Upper lobe of right lung (tissue), 1 donor: ENCODE measurements at regions of chr21 and their contacts with region 1.

Region 1: DNA sequence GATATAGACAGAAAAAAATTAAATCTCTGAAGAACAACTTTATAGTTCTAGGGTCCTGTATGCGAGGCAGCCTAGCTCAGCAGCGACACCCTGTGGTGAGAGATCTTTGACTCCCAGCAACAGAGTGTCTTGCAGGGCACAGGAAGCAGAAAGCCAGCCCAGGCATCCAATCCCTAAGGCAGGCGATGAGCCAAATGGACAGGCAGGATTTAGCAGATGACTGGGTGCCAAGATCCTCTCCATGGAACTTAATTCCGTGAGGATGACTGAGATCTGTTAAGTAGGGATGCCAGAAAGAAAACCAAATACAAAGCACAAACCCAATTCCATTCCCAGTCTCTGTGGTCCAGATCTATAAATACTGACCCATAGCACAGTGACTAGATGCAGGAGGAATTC is 38.8 kb downstream of the HLCS start:
- DNase-seq: peak; percentile 76
- ATAC-seq: peak; percentile 91
- H3K4me3 ChIP-seq: no peak overlapping the region
- H3K27ac ChIP-seq: no peak overlapping the region
- H3K4me1 ChIP-seq: peaks cover 2% of the 10 kb centered on the region
- H3K27me3 ChIP-seq: no peaks in the 10 kb centered on the region
- CTCF ChIP-seq: peak; percentile 89

Region 2: DNA sequence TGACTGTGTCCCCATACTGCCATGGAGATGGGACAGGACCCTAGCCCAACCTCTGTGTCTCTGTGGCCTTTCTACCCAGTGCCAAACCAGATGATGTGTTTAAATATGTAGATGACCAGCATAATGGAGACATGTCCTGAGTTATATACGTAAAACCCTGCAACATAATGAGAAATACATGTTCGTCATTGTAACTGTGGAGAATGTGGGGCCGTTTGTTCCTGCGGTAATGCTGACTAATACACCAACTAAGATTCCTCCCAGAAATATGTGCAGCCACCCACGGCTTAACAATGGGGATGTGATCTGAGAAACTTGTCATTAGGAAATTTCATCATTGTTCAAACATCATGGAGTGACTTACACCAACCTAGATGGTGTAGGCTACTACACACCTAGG is 300.5 kb before region 1 on chr21:
- intact Hi-C with region 1: loop called (anchors 10 kb)
- DNase-seq: no peak
- ATAC-seq: no peak
- H3K4me3 ChIP-seq: no peak overlapping the region
- H3K27ac ChIP-seq: no peak overlapping the region
- H3K4me1 ChIP-seq: no peaks in the 10 kb centered on the region
- H3K27me3 ChIP-seq: peaks cover 11% of the 10 kb centered on the region
- CTCF ChIP-seq: no peak

Region 3: GRCh38 chr21:36792505-36792967 is 135.2 kb before region 1 on chr21:
- intact Hi-C with region 1: no loop called
- DNase-seq: no peak
- ATAC-seq: no peak
- H3K4me3 ChIP-seq: no peak overlapping the region
- H3K27ac ChIP-seq: no peak overlapping the region
- H3K4me1 ChIP-seq: no peaks in the 10 kb centered on the region
- H3K27me3 ChIP-seq: no peaks in the 10 kb centered on the region
- CTCF ChIP-seq: no peak

Region 4: DNA sequence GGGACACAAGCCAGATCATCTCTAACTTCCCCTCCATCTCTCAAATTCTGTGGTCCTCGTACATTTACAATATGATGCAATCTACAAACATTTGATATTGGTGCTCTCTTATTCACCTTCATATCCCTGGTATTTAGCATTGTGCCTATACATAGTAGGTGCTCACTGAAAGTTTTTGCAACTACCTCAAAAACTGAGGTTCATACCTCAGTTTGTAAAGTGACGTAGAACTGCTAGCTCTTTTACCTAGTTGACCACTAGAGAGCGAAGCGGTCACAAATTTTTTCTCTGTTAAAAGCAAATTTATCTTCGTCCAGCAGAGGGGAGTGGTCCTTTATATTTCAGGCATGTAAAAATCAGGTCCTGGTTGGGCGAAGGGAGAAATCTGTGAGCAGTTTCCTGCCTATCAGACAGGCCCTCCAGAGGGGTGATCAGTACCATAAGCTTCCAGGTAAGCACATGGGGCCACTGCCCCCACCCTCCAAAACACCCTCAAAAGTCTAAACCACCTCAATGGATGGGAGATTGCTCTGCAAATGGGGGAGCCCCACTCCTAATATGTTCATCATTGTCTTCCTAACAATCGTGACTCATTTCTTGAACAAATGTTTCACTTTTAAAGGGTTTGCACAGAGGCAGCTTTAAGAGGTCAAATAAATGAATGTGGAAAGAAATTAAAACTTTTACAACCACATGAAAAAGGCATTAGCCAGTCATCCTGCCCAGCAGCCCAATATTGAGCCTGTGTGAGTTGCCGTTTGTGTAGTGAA is 49.3 kb after region 1 on chr21:
- intact Hi-C with region 1: no loop called
- DNase-seq: no peak
- ATAC-seq: peak; percentile 59
- H3K4me3 ChIP-seq: no peak overlapping the region
- H3K27ac ChIP-seq: peak overlapping the region; percentile 6
- H3K4me1 ChIP-seq: peaks cover 14% of the 10 kb centered on the region
- H3K27me3 ChIP-seq: no peaks in the 10 kb centered on the region
- CTCF ChIP-seq: peak; percentile 51

Region 5: GRCh38 chr21:37009740-37010341 is 82.1 kb after region 1 on chr21:
- intact Hi-C with region 1: no loop called
- DNase-seq: peak; percentile 95
- ATAC-seq: peak; percentile 98
- H3K4me3 ChIP-seq: peak overlapping the region; percentile 37
- H3K27ac ChIP-seq: no peak overlapping the region
- H3K4me1 ChIP-seq: no peaks in the 10 kb centered on the region
- H3K27me3 ChIP-seq: peaks cover 20% of the 10 kb centered on the region
- CTCF ChIP-seq: peak; percentile 84